Naive thymus-derived CD4-positive, alpha-beta T cell (primary cell): ENCODE measurements at regions of chr10 and their contacts with region 1.

Region 1: DNA sequence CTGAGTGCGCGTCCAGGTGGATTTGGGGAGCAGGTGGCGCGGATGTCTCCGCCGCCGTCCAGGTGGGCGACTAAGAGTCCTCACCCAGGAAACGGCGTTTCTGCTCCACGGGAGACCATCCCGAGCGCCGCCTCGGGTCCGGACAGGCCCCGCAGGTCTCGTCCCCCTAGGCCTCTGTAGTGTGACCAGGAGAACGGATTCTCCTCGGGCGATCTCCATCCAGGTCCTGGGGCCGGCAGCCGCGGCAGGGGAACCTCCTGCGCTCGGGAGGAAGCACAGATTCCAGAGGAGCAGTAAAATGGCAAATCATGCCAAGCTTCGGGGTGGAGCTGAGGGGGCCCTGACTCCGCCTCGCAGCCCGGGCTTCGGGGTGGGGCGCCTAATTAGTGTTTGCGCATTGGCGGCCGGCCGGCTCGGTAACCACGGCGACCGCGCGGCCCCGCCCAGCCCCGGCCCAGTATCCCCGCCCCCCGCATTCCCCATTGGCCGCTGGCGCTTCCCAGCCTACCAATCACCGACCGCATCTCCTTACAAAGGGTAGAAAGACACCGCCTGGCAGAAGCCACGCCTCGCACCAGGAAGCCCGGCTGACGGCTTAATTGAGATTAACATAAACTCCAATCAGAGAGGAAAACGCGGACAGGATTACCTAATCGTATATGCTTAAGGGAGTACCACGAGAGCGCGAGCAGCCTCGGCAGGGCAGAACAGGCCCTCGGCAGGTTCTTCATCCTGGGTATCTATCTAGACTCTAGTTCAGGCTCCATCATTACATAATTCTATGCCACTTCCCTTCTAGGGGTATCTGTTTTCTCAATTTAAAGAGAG is 168.6 kb downstream of the ARHGAP12 start:
- DNase-seq: peak; percentile 85 to 98 (median 94)
- ATAC-seq: peak; percentile 97
- H3K4me3 ChIP-seq: peak overlapping the region; percentile 95
- H3K4me3 Mint-ChIP-seq: peak overlapping the region; percentile 81 to 96 (median 91)
- H3K27ac ChIP-seq: peak overlapping the region; percentile 87
- H3K27ac Mint-ChIP-seq: peak overlapping the region; percentile 90 to 100 (median 98)
- H3K4me1 ChIP-seq: peaks cover 6 to 7% of the 10 kb centered on the region in 2 donors
- H3K4me1 Mint-ChIP-seq: peaks cover 8 to 24% (median 16%) of the 10 kb centered on the region in 7 donors
- H3K27me3 ChIP-seq: no peaks in the 10 kb centered on the region
- H3K27me3 Mint-ChIP-seq: no peaks in the 10 kb centered on the region

Region 2: GRCh38 chr10:30701451-30702173 is 1058.4 kb before region 1 on chr10:
- CTCF ChIA-PET with region 1: no interaction called
- POLR2A ChIA-PET with region 1: interaction called, 3 read pairs
- intact Hi-C with region 1: loop called (anchors 2 to 5 kb)
- DNase-seq: peak in 8 of 9 donors; percentile 68 to 81 (median 74)
- ATAC-seq: peak; percentile 80
- H3K4me3 ChIP-seq: peak overlapping the region; percentile 31
- H3K4me3 Mint-ChIP-seq: peak overlapping the region; percentile 68 to 98 (median 88)
- H3K27ac ChIP-seq: peak overlapping the region; percentile 86
- H3K27ac Mint-ChIP-seq: peak overlapping the region; percentile 88 to 98 (median 96)
- H3K4me1 ChIP-seq: peaks cover 63 to 74% of the 10 kb centered on the region in 2 donors
- H3K4me1 Mint-ChIP-seq: peaks cover 51 to 97% (median 88%) of the 10 kb centered on the region in 7 donors
- H3K27me3 ChIP-seq: no peaks in the 10 kb centered on the region
- H3K27me3 Mint-ChIP-seq: no peaks in the 10 kb centered on the region

Region 3: DNA sequence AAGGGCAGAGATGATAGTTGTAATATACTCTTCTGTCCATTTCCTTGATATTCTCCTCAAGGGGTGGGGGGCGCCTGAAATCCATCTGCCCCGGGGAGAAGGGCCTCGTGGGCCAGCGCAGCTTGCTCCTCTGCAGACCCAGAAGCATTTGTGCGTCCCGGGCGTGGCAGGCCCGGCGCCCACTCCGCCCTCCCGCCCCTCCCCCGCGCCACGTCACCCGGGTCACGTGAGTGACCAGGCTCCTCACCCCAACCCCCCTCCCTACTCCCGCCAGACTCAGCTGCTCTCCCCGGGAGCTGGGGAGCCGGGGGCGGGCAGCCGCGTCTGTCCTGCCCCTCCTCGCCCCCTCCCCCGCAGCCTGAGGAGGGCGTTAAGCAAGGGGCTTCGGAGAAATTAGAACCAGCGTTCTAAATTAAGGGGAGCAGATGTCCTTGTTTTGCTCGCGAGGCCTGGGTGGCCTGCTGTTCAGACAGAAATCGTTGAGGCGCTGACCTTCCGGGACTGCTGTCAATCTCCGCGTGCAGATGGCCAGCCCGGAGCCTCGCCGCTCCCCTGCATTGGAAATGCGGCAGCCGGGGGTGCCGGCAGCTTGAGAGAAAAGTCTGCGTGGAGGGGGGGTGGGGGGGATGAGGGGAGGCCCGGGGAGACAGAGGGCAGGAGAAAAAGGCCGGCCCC is 626.2 kb before region 1 on chr10:
- CTCF ChIA-PET with region 1: no interaction called
- POLR2A ChIA-PET with region 1: no interaction called
- intact Hi-C with region 1: loop called in 1 of 2 experiments (anchors 1 kb)
- DNase-seq: peak; percentile 14 to 67 (median 38)
- ATAC-seq: peak; percentile 78
- H3K4me3 ChIP-seq: peak overlapping the region; percentile 66
- H3K4me3 Mint-ChIP-seq: peak overlapping the region; percentile 71 to 87 (median 82)
- H3K27ac ChIP-seq: peak overlapping the region; percentile 80
- H3K27ac Mint-ChIP-seq: peak overlapping the region; percentile 72 to 92 (median 87)
- H3K4me1 ChIP-seq: peaks cover 0 to 33% of the 10 kb centered on the region in 2 donors
- H3K4me1 Mint-ChIP-seq: peaks cover 18 to 68% (median 44%) of the 10 kb centered on the region in 7 donors
- H3K27me3 ChIP-seq: no peaks in the 10 kb centered on the region
- H3K27me3 Mint-ChIP-seq: no peaks in the 10 kb centered on the region

Region 4: GRCh38 chr10:31687663-31688482 is 72.1 kb before region 1 on chr10:
- CTCF ChIA-PET with region 1: no interaction called
- POLR2A ChIA-PET with region 1: interaction called, 3 read pairs
- intact Hi-C with region 1: loop called (anchors 5 kb)
- DNase-seq: peak in 7 of 9 donors; percentile 19 to 59 (median 46)
- ATAC-seq: peak; percentile 40
- H3K4me3 ChIP-seq: no peak overlapping the region
- H3K4me3 Mint-ChIP-seq: no peak overlapping the region
- H3K27ac ChIP-seq: no peak overlapping the region
- H3K27ac Mint-ChIP-seq: peak overlapping the region in 1 of 9 donors; percentile 34
- H3K4me1 ChIP-seq: no peaks in the 10 kb centered on the region
- H3K4me1 Mint-ChIP-seq: no peaks in the 10 kb centered on the region
- H3K27me3 ChIP-seq: no peaks in the 10 kb centered on the region
- H3K27me3 Mint-ChIP-seq: peaks cover 0 to 5% (median 0%) of the 10 kb centered on the region in 5 donors

Region 5: DNA sequence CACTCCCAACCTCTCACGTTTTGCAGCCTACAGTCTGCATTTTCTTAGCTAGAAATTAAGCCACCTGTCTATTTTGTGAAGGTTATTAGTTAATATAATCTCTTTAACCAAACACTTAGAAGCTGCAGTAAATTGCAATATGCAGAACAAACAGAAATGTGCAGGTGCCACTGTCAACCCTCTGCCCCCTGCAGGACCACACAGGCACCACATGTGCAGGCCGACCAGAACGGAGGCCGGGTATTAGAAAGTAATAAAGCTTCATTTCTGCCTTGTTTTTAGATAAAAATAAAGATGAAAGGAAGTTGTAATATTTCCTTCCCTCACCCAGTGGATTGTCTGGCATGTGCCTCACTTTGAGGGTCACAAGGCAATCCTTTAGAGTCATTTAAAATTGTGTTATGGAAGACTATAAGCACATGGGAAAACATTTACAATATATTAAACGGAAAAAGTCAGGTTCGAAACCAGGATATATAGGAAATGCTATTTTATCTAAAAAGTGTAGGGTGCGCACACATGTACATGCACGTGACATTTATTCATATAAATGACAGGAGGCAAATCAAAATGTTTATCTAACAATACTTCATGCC is 10.4 kb after region 1 on chr10:
- CTCF ChIA-PET with region 1: interaction called, 10 read pairs
- POLR2A ChIA-PET with region 1: no interaction called
- intact Hi-C with region 1: no loop called
- DNase-seq: peak; percentile 27 to 69 (median 57)
- ATAC-seq: peak; percentile 92
- H3K4me3 ChIP-seq: no peak overlapping the region
- H3K4me3 Mint-ChIP-seq: no peak overlapping the region
- H3K27ac ChIP-seq: no peak overlapping the region
- H3K27ac Mint-ChIP-seq: no peak overlapping the region
- H3K4me1 ChIP-seq: no peaks in the 10 kb centered on the region
- H3K4me1 Mint-ChIP-seq: no peaks in the 10 kb centered on the region
- H3K27me3 ChIP-seq: no peaks in the 10 kb centered on the region
- H3K27me3 Mint-ChIP-seq: no peaks in the 10 kb centered on the region

Region 6: DNA sequence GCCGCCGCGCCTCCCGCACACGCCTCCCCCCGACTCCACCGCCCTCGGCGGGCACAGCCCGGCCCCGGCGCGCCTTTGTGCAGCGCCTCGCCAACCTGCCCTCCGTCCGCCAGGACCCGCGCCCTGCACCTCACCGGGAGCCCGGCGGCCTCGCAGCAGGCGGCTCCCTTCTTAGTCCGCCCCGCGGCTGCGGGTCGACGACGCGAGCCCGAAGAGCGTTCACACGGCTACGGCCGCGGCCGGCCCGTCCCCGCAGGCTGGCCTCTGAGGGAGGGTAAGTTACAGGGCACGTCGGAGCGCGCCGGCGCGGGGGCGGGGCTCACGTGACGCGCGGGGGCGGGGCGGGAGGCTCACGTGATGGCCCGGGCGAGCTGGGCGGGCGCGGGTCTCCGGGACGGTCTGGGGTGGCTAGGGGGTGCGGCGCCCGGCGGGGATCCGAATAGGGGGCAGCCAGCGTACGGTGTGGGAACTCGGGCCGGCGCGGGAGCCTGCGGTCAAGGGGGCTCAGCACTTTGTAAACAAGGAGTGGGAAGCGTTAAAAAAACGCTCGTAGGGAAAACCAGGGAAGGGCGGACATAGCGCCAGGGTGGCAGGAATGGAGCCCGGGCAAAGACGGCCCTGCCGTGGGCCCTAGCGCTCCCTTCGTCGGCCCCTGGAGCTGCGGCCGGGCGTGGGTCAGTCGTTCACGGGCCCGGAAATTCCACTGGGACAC is 168.7 kb after region 1 on chr10 and contains the start of gene ARHGAP12:
- CTCF ChIA-PET with region 1: no interaction called
- POLR2A ChIA-PET with region 1: no interaction called
- intact Hi-C with region 1: loop called in 1 of 2 experiments (anchors 1 kb)
- DNase-seq: peak; percentile 76 to 90 (median 85)
- ATAC-seq: peak; percentile 87
- H3K4me3 ChIP-seq: peak within 1 kb of the TSS; percentile 90
- H3K4me3 Mint-ChIP-seq: peak within 1 kb of the TSS; percentile 73 to 95 (median 92)
- H3K27ac ChIP-seq: peak within 1 kb of the TSS; percentile 84
- H3K27ac Mint-ChIP-seq: peak within 1 kb of the TSS; percentile 66 to 93 (median 86)
- H3K4me1 ChIP-seq: peaks cover 10% of the 10 kb centered on the region in 2 donors
- H3K4me1 Mint-ChIP-seq: peaks cover 30 to 51% (median 47%) of the 10 kb centered on the region in 7 donors
- H3K27me3 ChIP-seq: no peaks in the 10 kb centered on the region
- H3K27me3 Mint-ChIP-seq: peaks cover 0 to 9% (median 0%) of the 10 kb centered on the region in 5 donors
- total RNA-seq, gene ARHGAP12: 10.6 to 34.6 (median 31.4) TPM

Region 7: GRCh38 chr10:32378363-32379317 is 618.6 kb after region 1 on chr10:
- CTCF ChIA-PET with region 1: no interaction called
- POLR2A ChIA-PET with region 1: no interaction called
- intact Hi-C with region 1: loop called (anchors 1 to 2 kb)
- DNase-seq: peak; percentile 69 to 95 (median 91)
- ATAC-seq: peak; percentile 97
- H3K4me3 ChIP-seq: peak overlapping the region; percentile 92
- H3K4me3 Mint-ChIP-seq: no peak overlapping the region
- H3K27ac ChIP-seq: peak overlapping the region; percentile 91
- H3K27ac Mint-ChIP-seq: no peak overlapping the region
- H3K4me1 ChIP-seq: peaks cover 4 to 11% of the 10 kb centered on the region in 2 donors
- H3K4me1 Mint-ChIP-seq: peaks cover 12 to 21% (median 20%) of the 10 kb centered on the region in 7 donors
- H3K27me3 ChIP-seq: no peaks in the 10 kb centered on the region
- H3K27me3 Mint-ChIP-seq: no peaks in the 10 kb centered on the region